ENCODE measurements at regions of chr20 and their contacts with region 1.

Region 1: GRCh38 chr20:63056236-63056948 is 49.6 kb upstream of the BHLHE23 start:
- DNase-seq: peak in 1 of 2 donors; percentile 16
- ATAC-seq: peak; percentile 67

Region 2: GRCh38 chr20:63116412-63117099 is 60.2 kb after region 1 on chr20:
- intact Hi-C with region 1: no loop called
- DNase-seq: no peak
- ATAC-seq: no peak

Region 3: DNA sequence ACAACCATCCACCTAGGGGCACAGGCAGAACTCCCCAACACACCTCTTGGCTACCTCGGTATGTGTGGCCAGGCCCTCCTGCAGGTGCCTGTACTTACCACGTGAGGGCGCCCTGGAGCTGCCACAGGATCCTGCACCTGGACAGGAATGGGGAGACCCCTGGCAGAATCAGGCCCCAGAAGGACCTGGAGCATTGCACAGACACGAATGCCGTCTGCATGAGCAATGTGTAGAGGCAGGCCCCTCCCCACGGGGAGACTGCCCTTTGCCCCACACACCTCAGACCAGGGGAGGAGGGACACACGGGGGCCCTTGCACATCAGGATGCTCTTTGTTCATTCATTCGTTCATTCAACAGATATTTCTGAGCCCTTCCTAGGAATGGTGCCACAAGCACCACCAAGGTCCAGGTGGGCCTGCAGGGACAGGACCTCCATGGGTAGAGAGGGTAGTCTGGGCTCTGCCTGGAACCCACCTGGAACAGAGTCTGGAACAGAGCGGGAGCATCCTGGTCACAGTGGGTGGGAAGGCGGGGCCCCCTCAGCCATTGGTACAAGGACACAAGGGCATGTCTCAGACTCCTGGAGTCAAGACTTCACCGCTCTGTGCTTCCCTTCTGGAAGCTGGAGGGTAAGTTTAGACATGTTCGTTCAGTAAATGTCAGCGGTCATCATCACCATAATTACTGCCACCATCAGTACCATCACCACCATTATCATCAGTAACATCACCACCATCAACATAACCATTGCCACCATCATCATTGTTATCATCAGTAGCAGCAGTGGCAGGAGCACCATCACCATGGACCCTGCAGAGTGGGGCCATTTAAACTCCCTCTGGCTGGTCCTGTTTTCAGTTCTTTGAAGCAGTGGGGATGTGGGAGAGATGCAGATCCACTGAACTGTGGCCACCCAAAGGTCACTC is 127.3 kb after region 1 on chr20:
- intact Hi-C with region 1: loop called in 1 of 2 experiments (anchors 10 kb)
- DNase-seq: peak in 1 of 2 donors; percentile 37
- ATAC-seq: peak; percentile 64

Region 4: DNA sequence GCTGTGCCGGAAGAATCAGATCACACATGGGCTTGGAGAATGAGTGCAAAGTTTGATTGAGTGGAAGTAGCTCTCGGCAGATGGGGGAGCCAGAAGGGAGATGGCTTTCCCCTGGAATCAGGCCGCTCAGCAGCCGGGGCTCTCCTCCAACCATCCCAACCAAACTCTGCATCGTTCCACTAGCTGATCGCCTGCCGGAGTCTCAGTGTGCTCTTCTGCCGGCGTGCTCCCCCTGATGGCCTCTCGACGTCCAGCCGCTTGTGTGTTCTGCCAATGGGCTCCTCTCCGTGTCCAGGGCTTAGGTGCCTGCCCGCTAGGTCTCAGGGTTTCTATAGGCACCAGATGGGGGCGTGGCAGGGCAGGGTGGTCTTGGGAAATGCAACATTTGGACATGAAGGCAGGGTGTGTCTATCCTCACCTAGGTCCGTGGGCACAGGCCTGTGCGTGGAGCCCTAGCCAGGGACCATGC is 174.4 kb after region 1 on chr20:
- intact Hi-C with region 1: loop called in 1 of 2 experiments (anchors 10 kb)
- DNase-seq: peak in 1 of 2 donors; percentile 53
- ATAC-seq: peak; percentile 77

Measured in left colon (tissue), 2 donors.